ENCODE measurements at regions of chr2 and their contacts with region 1.

Region 1: DNA sequence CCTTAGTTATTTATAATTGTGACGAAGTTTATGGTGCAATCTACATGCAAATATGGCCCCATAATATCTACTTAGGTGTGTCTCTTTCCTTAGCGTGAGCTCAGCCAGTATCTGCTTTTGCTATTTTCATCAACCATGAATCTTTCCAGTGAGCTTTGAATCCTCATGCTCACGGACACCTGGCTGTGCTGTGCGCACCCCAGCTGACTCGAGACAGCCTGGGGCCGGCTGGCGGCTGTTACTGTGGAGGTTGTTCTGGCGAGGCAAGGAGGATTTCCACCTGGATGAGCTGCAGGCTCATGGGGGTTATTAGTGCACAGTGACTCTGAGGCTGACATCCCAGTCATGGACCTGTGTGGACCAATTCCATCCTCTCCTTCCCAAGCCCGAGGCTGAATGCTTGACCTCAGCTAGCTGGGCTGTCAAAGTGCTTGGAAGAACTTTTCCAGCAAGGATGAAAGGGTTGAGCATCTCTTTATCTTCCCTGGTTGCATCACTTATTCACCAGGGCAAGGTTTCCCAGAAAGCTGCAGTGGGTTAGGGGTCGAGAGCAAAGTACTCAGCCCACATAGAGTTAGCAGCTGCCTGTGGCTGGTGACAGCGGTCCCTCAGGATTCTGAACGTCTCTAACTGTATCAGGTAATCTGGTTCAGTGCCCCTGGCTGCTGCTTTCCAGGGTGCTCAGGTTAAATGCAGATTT is 141.7 kb downstream of the ARL4C start:
- DNase-seq: peak; percentile 92
- H3K4me3 ChIP-seq: peak overlapping the region; percentile 39
- H3K27ac ChIP-seq: peak overlapping the region; percentile 73
- H3K4me1 ChIP-seq: peaks cover 42% of the 10 kb centered on the region
- CTCF ChIP-seq: no peak; the same call in 1 of the 2 replicates

Region 2: GRCh38 chr2:234278556-234279255 is 76.5 kb before region 1 on chr2:
- CTCF ChIA-PET with region 1: no interaction called
- POLR2A ChIA-PET with region 1: no interaction called
- intact Hi-C with region 1: no loop called
- DNase-seq: no peak
- H3K4me3 ChIP-seq: no peak overlapping the region
- H3K27ac ChIP-seq: no peak overlapping the region
- H3K4me1 ChIP-seq: no peaks in the 10 kb centered on the region
- CTCF ChIP-seq: no peak

Region 3: GRCh38 chr2:234288974-234289455 is 66.2 kb before region 1 on chr2:
- CTCF ChIA-PET with region 1: interaction called, 3 read pairs
- POLR2A ChIA-PET with region 1: interaction called, 3 read pairs
- intact Hi-C with region 1: loop called (anchors 1 kb)
- DNase-seq: peak; percentile 72
- H3K4me3 ChIP-seq: peak overlapping the region; percentile 4
- H3K27ac ChIP-seq: peak overlapping the region; percentile 97
- H3K4me1 ChIP-seq: peaks cover 56% of the 10 kb centered on the region
- CTCF ChIP-seq: peak; percentile 95

Region 4: GRCh38 chr2:234368861-234369261 is 13.7 kb after region 1 on chr2:
- CTCF ChIA-PET with region 1: no interaction called
- POLR2A ChIA-PET with region 1: interaction called, 17 read pairs
- intact Hi-C with region 1: no loop called
- DNase-seq: no peak
- H3K4me3 ChIP-seq: no peak overlapping the region
- H3K27ac ChIP-seq: no peak overlapping the region
- H3K4me1 ChIP-seq: peaks cover 57% of the 10 kb centered on the region
- CTCF ChIP-seq: no peak

Region 5: DNA sequence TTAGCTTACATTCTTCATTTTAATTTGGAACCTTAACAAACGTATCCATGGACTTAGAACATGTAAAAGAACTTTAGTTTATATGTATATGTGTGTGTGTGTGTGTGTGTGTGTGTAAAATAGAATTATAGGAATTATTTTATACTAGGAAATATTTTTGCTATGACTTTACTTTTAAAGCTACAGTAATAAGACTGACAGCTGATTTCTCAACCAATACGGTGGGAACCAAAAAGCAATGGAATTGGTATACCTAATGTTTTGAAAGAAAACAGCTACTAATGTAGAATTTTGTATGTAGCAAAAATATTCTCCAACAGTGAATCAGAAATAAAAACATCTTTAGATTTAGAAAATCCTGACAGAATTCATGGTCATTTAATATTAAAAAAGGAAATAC is 288.2 kb after region 1 on chr2:
- CTCF ChIA-PET with region 1: no interaction called
- POLR2A ChIA-PET with region 1: no interaction called
- intact Hi-C with region 1: no loop called
- DNase-seq: peak; percentile 22
- H3K4me3 ChIP-seq: no peak overlapping the region
- H3K27ac ChIP-seq: no peak overlapping the region
- H3K4me1 ChIP-seq: no peaks in the 10 kb centered on the region
- CTCF ChIP-seq: no peak